Mucosa of descending colon (tissue), 3 donors: ENCODE measurements at regions of chr9 and their contacts with region 1.

Region 1: DNA sequence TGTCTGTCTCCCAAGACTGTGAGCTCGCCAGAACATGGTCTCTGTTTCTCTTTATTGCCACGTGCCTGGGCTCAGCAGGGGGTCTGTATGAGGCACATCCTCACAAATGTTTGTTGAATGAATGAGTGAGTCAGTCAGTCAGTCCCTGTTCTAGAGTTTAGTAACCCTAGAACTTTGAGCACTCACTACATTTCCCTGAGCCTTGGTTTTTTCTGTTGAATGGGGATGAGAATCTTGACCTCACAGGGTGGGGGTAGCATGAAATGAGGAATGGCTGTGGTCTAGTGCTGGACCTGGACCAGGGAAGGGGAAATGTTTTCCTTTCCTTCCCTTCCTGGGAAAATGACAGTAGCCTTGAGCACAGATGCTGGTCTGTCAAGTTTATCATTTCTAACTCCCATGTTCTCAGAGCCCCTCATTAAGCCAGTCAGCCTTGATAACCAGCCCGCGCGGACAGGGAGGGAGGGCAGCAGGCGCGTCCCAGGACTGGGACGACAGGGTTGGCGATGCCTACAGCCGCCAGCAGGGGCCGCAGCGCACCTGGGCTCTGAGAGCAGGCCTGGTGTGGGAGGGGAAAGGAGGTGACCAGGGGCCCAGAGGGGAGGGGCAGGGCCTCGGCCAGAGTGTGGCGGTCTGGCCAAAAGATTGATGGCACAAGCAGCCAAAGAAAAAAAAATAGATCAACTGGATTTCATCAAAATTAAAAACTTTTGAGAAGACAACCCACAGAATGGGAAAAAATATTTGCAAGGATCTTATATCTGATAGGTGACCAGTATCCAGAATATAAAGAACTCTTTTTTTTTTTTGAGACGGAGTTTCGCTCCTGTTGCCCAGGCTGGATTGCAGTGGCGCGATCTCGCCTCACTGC is 24.1 kb upstream of the WNK2 start:
- DNase-seq: peak; percentile 86 to 90 (median 90)
- ATAC-seq: peak; percentile 99
- H3K4me3 ChIP-seq: no peak overlapping the region
- H3K4me1 ChIP-seq: no peaks in the 10 kb centered on the region
- CTCF ChIP-seq: peak; percentile 90

Region 2: DNA sequence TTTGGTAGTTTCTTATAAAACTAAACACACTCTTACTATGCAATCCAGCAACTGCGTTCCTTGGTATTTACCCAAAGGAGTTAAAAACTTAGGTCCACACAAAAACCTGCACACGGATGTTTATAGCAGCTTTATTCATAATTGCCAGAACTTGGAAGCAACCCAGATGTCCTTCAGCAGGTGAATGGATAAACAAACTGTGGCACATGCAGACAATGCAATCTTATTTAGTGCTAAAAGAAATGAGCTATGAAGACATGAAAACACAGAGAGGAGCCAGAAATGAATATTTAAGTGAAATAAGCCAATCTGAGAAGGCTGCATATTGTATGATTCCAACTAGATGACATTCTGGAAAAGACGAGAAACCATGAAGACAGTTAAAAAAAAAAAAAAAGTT is 34.8 kb after region 1 on chr9:
- intact Hi-C with region 1: loop called in 1 of 2 experiments (anchors 2 kb)
- DNase-seq: peak in 1 of 3 donors; percentile 69
- ATAC-seq: peak; percentile 2
- H3K4me3 ChIP-seq: no peak overlapping the region
- H3K4me1 ChIP-seq: peaks cover 45% of the 10 kb centered on the region
- CTCF ChIP-seq: no peak

Region 3: GRCh38 chr9:93302551-93303257 is 142.9 kb after region 1 on chr9:
- intact Hi-C with region 1: loop called (anchors 10 kb)
- DNase-seq: peak in 2 of 3 donors; percentile 75 to 83
- ATAC-seq: peak; percentile 35
- H3K4me3 ChIP-seq: no peak overlapping the region
- H3K4me1 ChIP-seq: peaks cover 30% of the 10 kb centered on the region
- CTCF ChIP-seq: peak; percentile 44